ENCODE measurements at regions of chr6 and their contacts with region 1.

Region 1: GRCh38 chr6:138001750-138002349 is 105.4 kb downstream of the PERP start:
- DNase-seq: peak; percentile 65
- H3K4me3 ChIP-seq: no peak overlapping the region
- H3K27ac ChIP-seq: no peak overlapping the region
- H3K4me1 ChIP-seq: no peaks in the 10 kb centered on the region
- H3K27me3 ChIP-seq: no peaks in the 10 kb centered on the region
- CTCF ChIP-seq: peak; percentile 73 to 91 (median 90)
- POLR2A ChIP-seq: no peak

Region 2: DNA sequence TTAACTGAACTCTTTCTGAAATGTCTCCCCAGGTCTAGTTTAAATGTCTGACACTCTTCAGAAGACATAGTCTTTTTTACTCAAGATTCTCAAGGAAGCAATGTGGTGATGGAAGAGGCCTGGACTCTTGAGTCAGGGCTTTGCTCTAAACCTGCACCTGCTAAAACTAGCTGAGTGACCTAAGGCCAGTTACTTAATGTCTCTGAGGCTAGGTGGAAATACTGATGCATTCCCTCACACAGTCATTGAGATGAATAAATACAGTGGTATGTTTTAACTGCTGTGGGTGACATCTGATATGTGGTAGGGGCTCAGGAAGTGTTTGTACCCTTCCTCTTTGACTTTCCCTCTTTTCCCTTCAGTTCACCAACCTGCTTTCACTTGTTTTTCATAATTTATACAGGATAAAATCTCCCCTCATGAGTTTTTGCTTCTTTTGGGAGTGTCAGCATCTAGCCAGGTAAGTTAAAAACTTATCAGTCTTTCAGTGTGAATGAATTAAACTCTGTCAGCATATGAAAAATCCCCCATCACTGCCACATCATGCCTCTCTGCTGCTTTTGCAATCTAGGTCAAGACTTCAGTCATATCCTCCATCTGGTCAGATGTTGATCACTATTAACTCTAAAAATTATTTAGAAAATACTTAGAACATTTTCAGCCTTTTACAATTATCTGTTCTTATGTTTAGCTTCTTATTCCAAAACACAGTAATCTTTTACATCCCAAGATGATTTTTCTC is 313.4 kb before region 1 on chr6:
- intact Hi-C with region 1: no loop called
- DNase-seq: no peak
- H3K4me3 ChIP-seq: no peak overlapping the region
- H3K27ac ChIP-seq: no peak overlapping the region
- H3K4me1 ChIP-seq: no peaks in the 10 kb centered on the region
- H3K27me3 ChIP-seq: no peaks in the 10 kb centered on the region
- CTCF ChIP-seq: no peak
- POLR2A ChIP-seq: no peak

Region 3: DNA sequence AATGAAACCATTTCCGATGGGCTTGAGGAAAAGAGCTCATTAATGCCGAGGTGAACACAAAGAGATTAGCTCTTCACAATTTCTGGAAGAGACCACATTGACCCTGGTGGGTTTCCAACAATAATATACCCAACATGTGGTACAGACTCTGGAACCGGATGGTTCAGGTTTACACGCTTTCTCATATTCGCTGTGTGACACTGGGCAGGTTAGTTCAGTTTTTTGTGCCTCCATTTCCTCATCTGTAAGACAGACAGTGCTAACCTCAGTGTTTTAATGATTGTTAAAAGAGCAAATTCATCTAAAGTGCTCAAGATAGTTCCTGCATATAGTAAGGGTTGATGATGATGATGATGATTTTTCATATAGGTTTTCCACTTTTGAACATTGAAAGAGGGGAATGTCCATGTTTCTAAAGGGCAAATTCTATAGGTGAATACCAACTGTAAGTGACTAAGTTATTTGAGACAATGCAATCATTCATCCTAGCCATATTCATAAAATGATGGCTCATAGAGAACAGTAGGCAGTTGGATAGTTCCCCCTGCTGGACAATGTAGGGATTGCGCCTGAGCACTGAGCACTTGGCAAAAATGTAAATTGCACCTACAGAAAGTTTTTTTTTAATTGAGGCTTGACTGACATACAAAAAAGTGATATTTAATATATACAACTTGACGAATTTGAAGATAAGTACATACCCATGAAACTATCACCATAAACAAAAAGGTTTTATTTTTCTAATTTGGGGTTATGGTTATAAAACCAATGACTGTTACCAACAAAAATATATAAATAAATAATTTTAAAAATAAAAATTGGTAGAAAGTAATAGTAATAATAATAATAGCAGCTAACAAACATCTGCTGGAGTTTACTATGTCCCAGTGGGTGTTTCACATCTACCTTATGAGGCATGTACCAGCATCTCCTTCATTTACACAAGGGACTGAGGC is 107.5 kb after region 1 on chr6:
- intact Hi-C with region 1: loop called (anchors 1 kb)
- DNase-seq: peak; percentile 73
- H3K4me3 ChIP-seq: no peak overlapping the region
- H3K27ac ChIP-seq: peak overlapping the region; percentile 34 to 99
- H3K4me1 ChIP-seq: no peaks in the 10 kb centered on the region
- H3K27me3 ChIP-seq: no peaks in the 10 kb centered on the region
- CTCF ChIP-seq: peak; percentile 95 to 98 (median 97)
- POLR2A ChIP-seq: no peak

Region 4: GRCh38 chr6:138287144-138287955 is 285.5 kb after region 1 on chr6:
- intact Hi-C with region 1: loop called (anchors 10 kb)
- DNase-seq: peak; percentile 75
- H3K4me3 ChIP-seq: no peak overlapping the region
- H3K27ac ChIP-seq: peak overlapping the region; percentile 15 to 16
- H3K4me1 ChIP-seq: no peaks in the 10 kb centered on the region
- H3K27me3 ChIP-seq: no peaks in the 10 kb centered on the region
- CTCF ChIP-seq: peak; percentile 41 to 77 (median 74)
- POLR2A ChIP-seq: no peak

Measured in prostate gland (tissue), 2 donors.